ENCODE measurements at regions of chr5 and their contacts with region 1.

Region 1: DNA sequence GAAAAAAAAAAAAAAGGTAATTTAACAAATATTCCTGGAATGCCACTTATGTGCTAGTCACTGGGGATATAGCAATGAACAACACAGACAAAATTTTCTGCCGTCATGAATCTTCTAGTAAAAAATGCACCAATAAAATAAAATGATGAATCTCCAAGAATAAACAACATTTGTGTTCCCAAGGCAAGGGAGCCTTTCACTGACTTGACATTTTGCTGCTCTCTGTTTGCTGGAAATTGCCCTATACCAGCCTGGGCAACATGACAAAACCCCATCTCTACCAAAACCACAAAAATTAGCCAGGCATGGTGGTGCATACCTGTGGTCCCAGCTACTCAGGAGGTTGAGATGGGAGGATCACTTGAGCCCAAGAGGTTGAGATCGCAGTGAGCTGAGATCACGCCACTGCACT is 64.5 kb upstream of the ERBIN start:
- DNase-seq: peak; percentile 85 to 96
- H3K4me3 ChIP-seq: no peak overlapping the region
- H3K27ac ChIP-seq: peak overlapping the region; percentile 97
- H3K4me1 ChIP-seq: peaks cover 37% of the 10 kb centered on the region
- H3K27me3 ChIP-seq: no peaks in the 10 kb centered on the region
- CTCF ChIP-seq: no peak

Region 2: GRCh38 chr5:65760504-65761275 is 101.1 kb before region 1 on chr5:
- CTCF ChIA-PET with region 1: no interaction called
- POLR2A ChIA-PET with region 1: no interaction called
- intact Hi-C with region 1: loop called (anchors 10 kb)
- DNase-seq: peak; percentile 36 to 41
- H3K4me3 ChIP-seq: no peak overlapping the region
- H3K27ac ChIP-seq: no peak overlapping the region
- H3K4me1 ChIP-seq: no peaks in the 10 kb centered on the region
- H3K27me3 ChIP-seq: no peaks in the 10 kb centered on the region
- CTCF ChIP-seq: no peak; the same call in 1 of the 2 replicates

Region 3: DNA sequence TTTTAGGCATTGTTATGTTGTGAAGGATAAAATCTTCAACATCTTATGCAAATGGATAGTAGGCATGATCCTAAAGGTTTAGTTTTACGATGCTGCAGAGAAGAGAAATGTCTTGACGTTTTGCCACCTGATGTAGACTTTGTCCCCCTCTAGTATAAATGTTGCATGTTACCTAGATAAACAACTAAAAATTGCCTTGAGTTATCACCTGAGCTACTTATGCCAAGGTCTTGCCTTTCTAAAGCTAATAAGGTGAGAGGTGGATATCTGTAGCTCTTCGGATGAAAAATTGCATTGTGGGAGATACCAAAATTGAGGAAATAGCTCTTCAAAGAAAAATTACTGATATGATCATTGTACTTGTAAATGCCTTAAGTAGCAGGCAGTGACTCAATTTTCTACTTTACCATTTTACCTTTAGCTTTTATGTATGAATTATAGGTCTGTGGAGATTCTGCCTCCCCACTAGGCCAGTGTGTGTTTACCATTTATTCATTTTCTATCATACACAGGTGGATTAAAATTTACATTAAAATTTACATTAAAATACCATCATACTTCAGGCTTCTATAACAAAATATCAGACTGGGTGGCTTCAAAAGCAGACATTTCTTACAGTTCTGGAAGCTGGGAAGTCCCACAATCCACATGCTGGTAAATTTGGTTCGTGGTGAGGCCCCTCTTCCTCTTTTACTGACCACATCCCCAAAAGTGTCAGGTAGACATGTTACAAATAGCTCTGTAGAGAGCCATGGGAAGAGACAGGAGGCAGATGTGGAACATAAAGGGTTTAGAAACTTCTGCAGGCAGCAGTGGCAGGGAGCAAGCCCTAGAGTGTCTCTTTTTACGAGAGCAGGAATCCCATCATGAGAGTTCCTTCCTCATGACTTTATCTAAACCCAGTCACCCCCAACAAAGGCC is 36.2 kb before region 1 on chr5:
- CTCF ChIA-PET with region 1: no interaction called
- POLR2A ChIA-PET with region 1: interaction called, 11 read pairs
- intact Hi-C with region 1: loop called (anchors 1 kb)
- DNase-seq: no peak
- H3K4me3 ChIP-seq: no peak overlapping the region
- H3K27ac ChIP-seq: peak overlapping the region; percentile 15; the same call in 1 of the 2 replicates
- H3K4me1 ChIP-seq: peaks cover 32% of the 10 kb centered on the region
- H3K27me3 ChIP-seq: no peaks in the 10 kb centered on the region
- CTCF ChIP-seq: no peak

Region 4: GRCh38 chr5:65886387-65886786 is 24.6 kb after region 1 on chr5:
- CTCF ChIA-PET with region 1: no interaction called
- POLR2A ChIA-PET with region 1: interaction called, 8 read pairs
- intact Hi-C with region 1: loop called (anchors 2 kb)
- DNase-seq: no peak
- H3K4me3 ChIP-seq: peak overlapping the region; percentile 47; the same call in 1 of the 2 replicates
- H3K27ac ChIP-seq: peak overlapping the region; percentile 80
- H3K4me1 ChIP-seq: peaks cover 25% of the 10 kb centered on the region
- H3K27me3 ChIP-seq: no peaks in the 10 kb centered on the region
- CTCF ChIP-seq: no peak

Measured in PC-9 (cell line).